ENCODE measurements at regions of chr14 and their contacts with region 1.

Region 1: GRCh38 chr14:55446218-55446654 is 5.8 kb upstream of the TBPL2 start:
- DNase-seq: no peak
- ATAC-seq: no peak
- H3K4me3 Mint-ChIP-seq: no peak overlapping the region
- H3K27ac Mint-ChIP-seq: no peak overlapping the region
- H3K4me1 Mint-ChIP-seq: no peaks in the 10 kb centered on the region
- H3K27me3 Mint-ChIP-seq: no peaks in the 10 kb centered on the region
- CTCF ChIP-seq: peak; percentile 37

Region 2: GRCh38 chr14:55398679-55399078 is 47.6 kb before region 1 on chr14:
- CTCF ChIA-PET with region 1: no interaction called
- POLR2A ChIA-PET with region 1: no interaction called
- intact Hi-C with region 1: no loop called
- DNase-seq: no peak
- ATAC-seq: no peak
- H3K4me3 Mint-ChIP-seq: no peak overlapping the region
- H3K27ac Mint-ChIP-seq: no peak overlapping the region
- H3K4me1 Mint-ChIP-seq: no peaks in the 10 kb centered on the region
- H3K27me3 Mint-ChIP-seq: no peaks in the 10 kb centered on the region
- CTCF ChIP-seq: no peak

Region 3: GRCh38 chr14:55488204-55488603 is 42.0 kb after region 1 on chr14:
- CTCF ChIA-PET with region 1: no interaction called
- POLR2A ChIA-PET with region 1: no interaction called
- intact Hi-C with region 1: no loop called
- DNase-seq: no peak
- ATAC-seq: no peak
- H3K4me3 Mint-ChIP-seq: no peak overlapping the region
- H3K27ac Mint-ChIP-seq: no peak overlapping the region
- H3K4me1 Mint-ChIP-seq: no peaks in the 10 kb centered on the region
- H3K27me3 Mint-ChIP-seq: peaks cover 3% of the 10 kb centered on the region
- CTCF ChIP-seq: no peak

Region 4: DNA sequence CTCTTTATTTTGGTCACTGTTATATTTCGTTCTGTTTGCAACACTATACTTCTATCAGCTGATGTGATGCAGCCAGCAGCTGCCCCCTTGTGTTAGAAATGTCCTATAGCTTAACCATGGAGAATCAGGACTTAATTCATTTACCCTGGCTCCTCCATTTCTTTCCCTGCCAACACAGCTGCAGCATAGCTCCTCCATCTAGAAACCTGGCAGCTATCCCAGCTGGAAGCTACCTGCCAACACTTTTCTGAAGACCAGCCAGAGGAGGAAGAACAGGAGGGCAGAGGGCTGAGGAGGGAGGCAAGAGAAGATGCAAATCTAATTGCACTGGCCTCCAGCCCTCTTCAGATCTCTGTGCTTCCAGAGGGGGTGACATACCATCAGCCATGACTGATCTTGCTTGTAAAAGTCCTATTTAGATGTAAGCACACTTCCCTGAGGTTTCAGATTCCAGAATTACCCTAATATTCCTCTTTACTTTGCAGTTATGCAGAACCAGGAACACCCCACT is 976.5 kb after region 1 on chr14:
- CTCF ChIA-PET with region 1: interaction called, 3 read pairs
- POLR2A ChIA-PET with region 1: no interaction called
- intact Hi-C with region 1: loop called (anchors 2 kb)
- DNase-seq: no peak
- ATAC-seq: no peak
- H3K4me3 Mint-ChIP-seq: no peak overlapping the region
- H3K27ac Mint-ChIP-seq: no peak overlapping the region
- H3K4me1 Mint-ChIP-seq: no peaks in the 10 kb centered on the region
- H3K27me3 Mint-ChIP-seq: no peaks in the 10 kb centered on the region
- CTCF ChIP-seq: no peak

Region 5: DNA sequence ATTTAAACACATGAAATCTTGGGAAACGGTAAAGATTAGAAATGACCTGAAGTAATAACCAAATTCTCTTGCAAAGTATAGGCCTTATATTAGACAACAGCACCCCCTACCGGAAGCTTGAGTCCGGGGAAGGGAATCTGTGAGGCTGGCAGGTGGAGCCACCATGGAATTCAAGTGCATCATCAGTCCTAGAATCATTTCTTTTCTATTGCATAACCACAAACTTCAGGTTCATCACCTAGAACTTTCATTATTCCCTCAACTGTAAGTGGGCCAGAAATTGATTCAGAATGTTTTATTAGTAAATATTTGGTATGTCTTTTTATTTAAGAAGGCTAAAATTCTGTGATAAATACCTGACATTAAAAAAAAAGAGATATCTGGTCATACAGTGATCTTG is 1871.1 kb after region 1 on chr14:
- CTCF ChIA-PET with region 1: interaction called, 3 read pairs
- POLR2A ChIA-PET with region 1: no interaction called
- intact Hi-C with region 1: loop called (anchors 1 kb)
- DNase-seq: no peak
- ATAC-seq: peak; percentile 68
- H3K4me3 Mint-ChIP-seq: no peak overlapping the region
- H3K27ac Mint-ChIP-seq: no peak overlapping the region
- H3K4me1 Mint-ChIP-seq: peaks cover 3% of the 10 kb centered on the region
- H3K27me3 Mint-ChIP-seq: no peaks in the 10 kb centered on the region
- CTCF ChIP-seq: peak; percentile 74